H1 (cell line): ENCODE measurements at regions of chr1 and their contacts with region 1.

Region 1: DNA sequence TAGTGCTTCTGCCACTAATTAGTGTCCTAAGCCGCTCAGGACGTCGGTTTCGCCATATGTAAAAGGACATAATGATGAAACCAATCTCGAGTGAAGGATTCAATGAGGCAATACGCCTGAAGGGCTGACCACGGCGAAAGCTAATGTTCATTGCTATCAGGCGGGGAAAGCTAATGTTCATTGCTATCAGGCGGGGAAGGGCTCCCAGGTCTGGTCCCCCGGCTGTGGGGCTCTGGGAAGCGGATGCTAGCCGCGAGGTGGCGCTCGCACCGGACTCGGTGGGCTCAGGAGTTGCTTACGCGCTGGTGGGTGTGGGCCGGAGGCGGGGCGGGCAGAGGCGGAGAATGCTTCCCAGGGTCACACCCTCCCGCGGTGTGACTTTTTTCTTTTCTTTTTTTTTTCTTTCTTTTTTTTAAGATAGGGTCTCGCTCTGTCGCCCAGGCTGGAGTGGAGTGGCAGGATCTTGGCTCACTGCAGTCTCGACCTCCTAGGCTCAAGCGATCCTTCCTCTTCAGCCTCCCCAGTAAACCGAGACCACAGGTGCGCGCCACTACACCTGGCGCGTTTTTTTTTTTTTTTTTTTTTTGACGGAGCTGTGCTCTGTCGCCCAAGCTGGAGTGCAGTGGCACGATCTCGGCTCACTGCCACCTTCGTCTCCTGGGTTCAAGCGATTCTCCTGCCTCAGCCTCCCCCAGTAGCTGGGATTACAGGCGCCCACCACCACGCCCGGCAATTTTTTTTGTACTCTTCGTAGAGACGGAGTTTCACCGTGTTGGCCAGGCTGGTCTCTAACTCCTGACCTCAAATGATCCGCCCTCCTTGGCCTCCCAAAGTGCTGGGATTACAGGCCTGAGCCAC is 1.1 kb upstream of the PEAR1 start:
- DNase-seq: peak; percentile 62 to 97
- H3K4me3 ChIP-seq: peak overlapping the region in 2 of 4 experiments; percentile 14 to 55; a peak in 4 of 8 replicates
- H3K27ac ChIP-seq: no peak overlapping the region
- H3K4me1 ChIP-seq: peaks cover 0 to 16% (median 9%) of the 10 kb centered on the region in 4 experiments; a peak in 5 of 7 replicates
- H3K27me3 ChIP-seq: peaks cover 8 to 54% (median 43%) of the 10 kb centered on the region in 4 experiments
- CTCF ChIP-seq: peak; percentile 84 to 93 (median 92)
- EP300 ChIP-seq: no peak
- POLR2A ChIP-seq: no peak
- RAD21 ChIP-seq: peak; percentile 45 to 63

Region 2: GRCh38 chr1:156797212-156797871 is 95.1 kb before region 1 on chr1:
- CTCF ChIA-PET with region 1: interaction called, 84 read pairs
- POLR2A ChIA-PET with region 1: interaction called, 5 read pairs
- DNase-seq: no peak
- H3K4me3 ChIP-seq: no peak overlapping the region
- H3K27ac ChIP-seq: no peak overlapping the region
- H3K4me1 ChIP-seq: no peaks in the 10 kb centered on the region
- H3K27me3 ChIP-seq: no peaks in the 10 kb centered on the region
- CTCF ChIP-seq: peak in 2 of 3 experiments; percentile 84 to 85; a peak in 3 of 4 replicates
- EP300 ChIP-seq: no peak
- POLR2A ChIP-seq: no peak
- RAD21 ChIP-seq: peak; percentile 81 to 83

Region 3: GRCh38 chr1:156860113-156860627 is 32.2 kb before region 1 on chr1:
- CTCF ChIA-PET with region 1: interaction called, 719 read pairs
- POLR2A ChIA-PET with region 1: interaction called, 4 read pairs
- DNase-seq: peak in 1 of 2 experiments; percentile 85
- H3K4me3 ChIP-seq: peak overlapping the region; percentile 31 to 62 (median 58)
- H3K27ac ChIP-seq: no peak overlapping the region
- H3K4me1 ChIP-seq: peaks cover 0 to 15% (median 9%) of the 10 kb centered on the region in 4 experiments; a peak in 6 of 7 replicates
- H3K27me3 ChIP-seq: peaks cover 55 to 87% (median 82%) of the 10 kb centered on the region in 4 experiments
- CTCF ChIP-seq: peak; percentile 67 to 80 (median 74)
- EP300 ChIP-seq: no peak
- POLR2A ChIP-seq: no peak
- RAD21 ChIP-seq: peak; percentile 76 to 83

Region 4: GRCh38 chr1:156904187-156904959 is 12.0 kb after region 1 on chr1:
- CTCF ChIA-PET with region 1: interaction called, 73 read pairs
- POLR2A ChIA-PET with region 1: no interaction called
- DNase-seq: no peak
- H3K4me3 ChIP-seq: no peak overlapping the region
- H3K27ac ChIP-seq: no peak overlapping the region
- H3K4me1 ChIP-seq: peaks cover 0 to 4% (median 0%) of the 10 kb centered on the region in 4 experiments; a peak in 3 of 7 replicates
- H3K27me3 ChIP-seq: peaks cover 0 to 4% (median 0%) of the 10 kb centered on the region in 4 experiments; a peak in 4 of 7 replicates
- CTCF ChIP-seq: no peak
- EP300 ChIP-seq: no peak
- POLR2A ChIP-seq: no peak
- RAD21 ChIP-seq: no peak

Region 5: DNA sequence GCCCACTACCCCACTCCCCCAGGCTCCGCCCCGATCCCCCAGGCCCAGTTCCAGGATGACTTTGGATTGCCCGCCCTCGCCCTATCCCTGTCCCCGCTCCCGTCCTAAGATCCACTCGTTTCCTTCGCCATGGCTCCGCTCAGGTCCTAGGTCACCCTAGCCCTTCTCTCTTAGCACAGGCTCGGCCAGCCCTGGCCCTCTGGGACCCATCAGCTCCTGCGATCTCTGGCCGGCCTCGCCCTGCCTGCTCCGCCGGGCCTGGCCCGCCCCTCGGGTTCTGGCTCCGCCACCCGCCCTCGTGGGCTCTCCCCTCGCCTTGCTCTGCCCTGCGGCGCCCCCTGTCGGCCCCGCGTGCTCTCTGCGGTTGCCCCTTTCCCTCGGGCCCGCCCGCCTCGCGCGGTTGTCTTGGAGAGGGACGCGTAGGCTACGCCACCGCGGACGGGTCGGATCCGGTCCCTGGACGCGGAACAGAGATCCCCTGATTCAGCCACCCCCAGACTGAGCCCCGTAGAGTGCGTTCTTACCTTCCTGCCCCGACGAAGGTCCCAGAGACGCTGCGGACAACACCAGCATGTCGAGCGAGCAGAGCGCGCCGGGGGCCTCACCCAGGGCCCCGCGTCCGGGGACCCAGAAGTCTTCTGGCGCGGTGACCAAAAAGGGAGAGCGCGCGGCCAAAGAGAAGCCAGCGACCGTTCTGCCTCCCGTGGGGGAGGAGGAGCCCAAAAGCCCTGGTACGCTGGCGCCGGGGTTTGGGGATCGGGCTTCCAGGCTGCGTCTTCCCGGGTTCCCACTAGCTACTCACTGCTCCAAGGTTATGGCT is 28.0 kb after region 1 on chr1 and contains the start of gene LRRC71:
- CTCF ChIA-PET with region 1: interaction called, 287 read pairs
- POLR2A ChIA-PET with region 1: interaction called, 10 read pairs
- DNase-seq: peak in 1 of 2 experiments; percentile 98
- H3K4me3 ChIP-seq: peak within 1 kb of the TSS; percentile 27 to 60 (median 39); a peak in 7 of 8 replicates
- H3K27ac ChIP-seq: no peak within 1 kb of the TSS
- H3K4me1 ChIP-seq: peaks cover 3 to 17% (median 8%) of the 10 kb centered on the region in 4 experiments; a peak in 6 of 7 replicates
- H3K27me3 ChIP-seq: peaks cover 53 to 73% (median 61%) of the 10 kb centered on the region in 4 experiments
- CTCF ChIP-seq: peak; percentile 90 to 96 (median 93)
- EP300 ChIP-seq: peak in 1 of 2 experiments; percentile 27; a peak in 1 of 3 replicates
- POLR2A ChIP-seq: no peak
- RAD21 ChIP-seq: peak; percentile 89 to 95
- total RNA-seq, gene LRRC71: not detected in 2 replicates

Region 6: DNA sequence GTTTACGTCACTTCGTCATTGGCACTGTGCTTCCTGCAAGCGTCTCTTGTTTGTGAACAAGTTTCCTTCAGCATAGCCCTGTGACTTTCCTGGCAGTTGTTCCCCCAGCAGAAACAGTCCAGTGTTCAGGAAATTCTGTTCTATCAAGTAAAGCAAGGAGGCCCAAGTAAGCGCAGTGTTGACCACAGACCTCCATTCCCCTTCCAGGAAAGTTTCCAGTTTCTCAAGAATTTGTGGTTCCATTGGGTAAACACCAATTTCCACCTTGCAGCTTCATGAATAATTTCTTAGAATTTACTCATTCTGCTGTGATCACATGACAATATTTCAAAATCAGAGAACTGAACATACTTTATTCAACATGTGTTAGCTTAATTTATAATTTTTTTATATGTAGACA is 334.3 kb after region 1 on chr1:
- CTCF ChIA-PET with region 1: no interaction called
- POLR2A ChIA-PET with region 1: no interaction called
- DNase-seq: no peak
- H3K4me3 ChIP-seq: no peak overlapping the region
- H3K27ac ChIP-seq: no peak overlapping the region
- H3K4me1 ChIP-seq: peaks cover 0 to 5% (median 3%) of the 10 kb centered on the region in 4 experiments; a peak in 3 of 7 replicates
- H3K27me3 ChIP-seq: no peaks in the 10 kb centered on the region
- CTCF ChIP-seq: no peak
- EP300 ChIP-seq: no peak
- POLR2A ChIP-seq: no peak
- RAD21 ChIP-seq: no peak